ENCODE measurements at regions of chr2 and their contacts with region 1.

Region 1: DNA sequence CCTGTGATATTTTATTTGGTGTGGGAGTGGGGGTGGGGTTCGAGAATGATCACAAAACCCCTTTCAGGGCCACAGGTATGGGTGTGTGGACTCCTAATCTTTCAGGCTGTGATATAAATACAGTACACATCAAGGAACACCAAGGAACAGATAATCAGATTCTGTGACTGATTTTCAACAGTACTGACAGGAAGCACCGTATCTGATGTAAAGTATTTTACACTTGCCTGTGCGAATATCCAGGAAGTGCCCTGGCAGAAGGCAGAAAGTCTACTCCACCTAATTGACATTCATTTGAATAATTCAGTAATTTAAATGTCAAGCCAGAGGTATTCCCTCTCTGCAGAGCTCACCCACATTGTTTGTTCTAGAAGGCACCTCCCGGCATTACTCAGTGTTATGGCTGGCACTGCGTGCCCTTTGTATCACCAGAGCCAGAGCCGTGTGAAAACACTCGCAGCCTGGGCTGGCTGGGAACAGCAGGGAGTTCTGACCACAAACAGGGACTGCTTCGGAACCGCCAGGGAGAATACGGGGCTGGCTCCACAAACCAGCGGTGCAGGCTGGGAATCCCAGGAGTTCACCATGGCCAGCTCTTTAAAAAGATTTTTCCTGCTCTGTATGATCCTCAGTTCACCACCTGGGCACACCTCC is 91.8 kb downstream of the ACVR1 start:
- DNase-seq: no peak
- H3K4me3 ChIP-seq: no peak overlapping the region
- H3K27ac ChIP-seq: no peak overlapping the region
- H3K4me1 ChIP-seq: peaks cover 0 to 21% (median 5%) of the 10 kb centered on the region in 4 experiments; a peak in 3 of 7 replicates
- H3K27me3 ChIP-seq: no peaks in the 10 kb centered on the region
- CTCF ChIP-seq: no peak
- EP300 ChIP-seq: no peak
- POLR2A ChIP-seq: no peak
- RAD21 ChIP-seq: no peak

Region 2: GRCh38 chr2:157572725-157573124 is 211.6 kb before region 1 on chr2:
- CTCF ChIA-PET with region 1: no interaction called
- POLR2A ChIA-PET with region 1: no interaction called
- DNase-seq: no peak
- H3K4me3 ChIP-seq: no peak overlapping the region
- H3K27ac ChIP-seq: no peak overlapping the region
- H3K4me1 ChIP-seq: no peaks in the 10 kb centered on the region
- H3K27me3 ChIP-seq: no peaks in the 10 kb centered on the region
- CTCF ChIP-seq: peak in 2 of 3 experiments; percentile 7 to 48; a peak in 2 of 4 replicates
- EP300 ChIP-seq: no peak
- POLR2A ChIP-seq: no peak
- RAD21 ChIP-seq: peak; percentile 20 to 37; a peak in 3 of 4 replicates

Region 3: DNA sequence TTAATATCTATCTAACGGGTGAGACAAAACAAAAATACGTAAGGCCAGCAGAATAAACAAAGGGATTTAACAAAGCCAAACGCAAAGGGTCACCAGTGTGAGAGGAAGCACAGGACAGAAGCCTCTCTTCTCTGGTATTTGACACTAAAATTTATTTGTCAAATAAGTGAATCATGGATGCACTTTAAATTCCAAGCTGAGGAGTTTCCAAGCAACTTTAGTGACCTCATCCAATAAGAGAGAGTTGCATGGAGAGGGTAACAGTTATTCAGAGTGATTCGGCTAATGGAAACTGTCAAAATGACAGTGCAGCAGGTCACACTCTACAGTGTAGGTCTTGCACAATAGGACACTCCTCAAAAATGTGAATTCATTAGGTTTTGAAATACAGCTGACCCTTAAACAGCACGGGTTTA is 51.7 kb before region 1 on chr2:
- CTCF ChIA-PET with region 1: no interaction called
- POLR2A ChIA-PET with region 1: no interaction called
- DNase-seq: no peak
- H3K4me3 ChIP-seq: no peak overlapping the region
- H3K27ac ChIP-seq: no peak overlapping the region
- H3K4me1 ChIP-seq: no peaks in the 10 kb centered on the region
- H3K27me3 ChIP-seq: no peaks in the 10 kb centered on the region
- CTCF ChIP-seq: no peak
- EP300 ChIP-seq: no peak
- POLR2A ChIP-seq: no peak
- RAD21 ChIP-seq: no peak

Region 4: DNA sequence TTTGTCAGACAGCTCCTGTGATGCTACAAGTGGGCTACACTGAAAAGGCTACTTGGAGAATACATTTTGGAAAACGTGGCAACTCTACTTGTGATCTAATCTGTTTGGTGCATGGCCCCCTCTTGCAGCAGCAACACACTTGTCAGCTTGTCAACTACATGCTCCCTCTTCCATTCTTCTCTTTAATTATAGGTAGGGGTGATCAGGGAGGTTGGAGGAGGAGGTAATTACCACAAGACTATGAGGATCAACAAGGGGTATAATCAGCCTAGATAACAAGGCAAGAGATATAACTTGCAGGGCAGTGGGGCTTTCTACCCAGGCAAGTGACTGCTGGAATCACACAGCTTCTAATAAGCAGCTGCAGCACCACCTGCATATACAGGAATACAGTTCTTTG is 13.1 kb before region 1 on chr2:
- CTCF ChIA-PET with region 1: interaction called, 26 read pairs
- POLR2A ChIA-PET with region 1: no interaction called
- DNase-seq: no peak
- H3K4me3 ChIP-seq: no peak overlapping the region
- H3K27ac ChIP-seq: no peak overlapping the region
- H3K4me1 ChIP-seq: peaks cover 0 to 3% (median 0%) of the 10 kb centered on the region in 4 experiments; a peak in 1 of 7 replicates
- H3K27me3 ChIP-seq: no peaks in the 10 kb centered on the region
- CTCF ChIP-seq: no peak
- EP300 ChIP-seq: no peak
- POLR2A ChIP-seq: no peak
- RAD21 ChIP-seq: no peak

Region 5: DNA sequence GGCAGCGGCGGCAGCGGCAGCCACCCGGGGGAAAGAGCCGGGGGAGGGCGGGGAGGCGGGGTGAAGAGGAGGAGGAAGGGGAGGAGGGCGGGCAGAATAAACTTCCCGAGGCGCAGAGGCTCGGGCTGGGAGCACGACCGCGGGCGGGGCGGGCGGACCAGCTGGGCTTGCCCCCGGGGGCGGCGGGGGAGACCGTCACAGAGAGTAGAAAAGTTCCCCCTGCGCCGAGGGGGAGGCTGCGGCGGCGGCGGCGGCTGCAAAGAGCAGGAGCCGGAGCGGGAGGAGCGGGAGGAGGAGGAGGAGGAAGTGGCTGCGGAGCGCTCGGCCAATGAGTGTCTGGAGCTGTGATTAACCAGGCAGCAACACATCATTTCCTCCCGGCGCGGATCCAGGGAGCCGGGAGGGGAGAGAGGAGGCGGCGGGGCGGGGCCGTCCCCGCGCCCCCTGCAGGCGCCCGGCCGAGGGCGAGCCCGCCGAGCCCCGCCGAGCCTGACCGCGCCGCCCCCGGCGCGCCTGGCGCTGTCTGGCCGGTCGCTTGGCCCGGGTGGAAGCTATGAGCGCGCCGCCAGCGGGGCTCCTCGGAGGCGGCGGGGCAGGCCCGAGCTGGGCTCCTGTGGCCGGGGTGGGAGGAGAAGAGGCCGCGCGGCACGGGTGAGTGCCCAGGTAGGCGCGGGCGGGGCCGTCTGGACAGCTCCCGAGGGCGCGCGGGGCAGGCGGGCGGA is 91.9 kb after region 1 on chr2 and contains the start of gene ACVR1:
- CTCF ChIA-PET with region 1: no interaction called
- POLR2A ChIA-PET with region 1: no interaction called
- DNase-seq: peak; percentile 78 to 87
- H3K4me3 ChIP-seq: peak within 1 kb of the TSS; percentile 53 to 78 (median 72)
- H3K27ac ChIP-seq: no peak within 1 kb of the TSS; the same call in 1 of the 2 replicates
- H3K4me1 ChIP-seq: peaks cover 0 to 8% (median 3%) of the 10 kb centered on the region in 4 experiments; a peak in 3 of 7 replicates
- H3K27me3 ChIP-seq: peaks cover 0 to 4% (median 0%) of the 10 kb centered on the region in 4 experiments; a peak in 1 of 7 replicates
- CTCF ChIP-seq: peak in 1 of 3 experiments; percentile 29; a peak in 1 of 4 replicates
- EP300 ChIP-seq: no peak
- POLR2A ChIP-seq: peak in 1 of 2 experiments; percentile 21; a peak in 2 of 3 replicates
- RAD21 ChIP-seq: no peak; a peak in 1 of 4 replicates
- total RNA-seq, gene ACVR1: 17.5 and 17.7 TPM in 2 replicates